Thyroid gland (tissue), 4 donors: ENCODE measurements at regions of chr1 and their contacts with region 1.

Region 1: DNA sequence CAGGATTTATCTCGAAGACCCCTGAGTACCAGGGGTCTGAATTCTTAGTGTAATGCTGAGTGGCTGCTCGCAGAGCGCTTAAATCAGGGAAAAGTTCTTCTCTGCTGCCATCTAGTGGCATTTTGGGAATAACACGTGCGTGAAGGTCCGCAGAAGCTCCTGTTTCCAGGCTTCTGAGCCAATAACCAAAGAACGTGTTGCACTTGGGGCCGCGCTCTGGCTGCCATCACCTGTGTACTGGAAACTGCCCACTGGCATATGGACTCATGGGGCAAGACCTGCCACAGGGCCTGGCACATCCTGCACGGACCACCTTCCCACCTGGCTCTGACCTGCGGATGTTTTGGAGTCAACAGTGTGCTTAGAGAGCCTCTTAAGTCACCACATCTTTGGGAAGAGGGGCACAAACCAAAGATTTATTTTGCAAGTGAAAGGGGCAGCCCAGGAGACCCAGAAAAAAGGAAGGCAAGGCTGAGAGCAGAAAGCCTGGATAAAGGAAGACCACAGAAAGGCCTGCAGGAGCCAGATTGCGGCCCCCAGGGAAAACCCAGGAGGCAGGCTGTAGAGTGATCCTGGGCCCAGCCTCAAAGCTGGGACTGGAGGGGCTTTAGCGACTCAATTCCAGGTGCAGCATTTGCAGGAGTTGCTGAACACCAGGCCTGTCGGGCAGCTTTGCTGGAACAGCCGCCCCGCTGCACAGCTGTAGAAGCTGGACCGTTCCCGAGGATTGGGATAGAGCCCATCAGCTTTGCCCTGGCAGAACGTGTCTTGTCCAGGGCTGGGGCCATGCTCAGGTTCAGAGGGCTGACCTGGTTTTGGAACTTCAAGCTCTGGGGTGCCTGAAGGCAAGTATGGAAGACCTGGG is 13.0 kb downstream of the CHIT1 start:
- DNase-seq: peak; percentile 50 to 52
- H3K4me3 ChIP-seq: no peak overlapping the region
- H3K27ac ChIP-seq: no peak overlapping the region
- H3K4me1 ChIP-seq: no peaks in the 10 kb centered on the region
- H3K27me3 ChIP-seq: no peaks in the 10 kb centered on the region
- CTCF ChIP-seq: peak; percentile 62 to 85 (median 76)
- POLR2A ChIP-seq: no peak

Region 2: GRCh38 chr1:203039609-203040512 is 176.6 kb before region 1 on chr1:
- intact Hi-C with region 1: loop called (anchors 5 kb)
- DNase-seq: no peak
- H3K4me3 ChIP-seq: no peak overlapping the region
- H3K27ac ChIP-seq: no peak overlapping the region
- H3K4me1 ChIP-seq: no peaks in the 10 kb centered on the region
- H3K27me3 ChIP-seq: no peaks in the 10 kb centered on the region
- CTCF ChIP-seq: no peak
- POLR2A ChIP-seq: no peak

Region 3: DNA sequence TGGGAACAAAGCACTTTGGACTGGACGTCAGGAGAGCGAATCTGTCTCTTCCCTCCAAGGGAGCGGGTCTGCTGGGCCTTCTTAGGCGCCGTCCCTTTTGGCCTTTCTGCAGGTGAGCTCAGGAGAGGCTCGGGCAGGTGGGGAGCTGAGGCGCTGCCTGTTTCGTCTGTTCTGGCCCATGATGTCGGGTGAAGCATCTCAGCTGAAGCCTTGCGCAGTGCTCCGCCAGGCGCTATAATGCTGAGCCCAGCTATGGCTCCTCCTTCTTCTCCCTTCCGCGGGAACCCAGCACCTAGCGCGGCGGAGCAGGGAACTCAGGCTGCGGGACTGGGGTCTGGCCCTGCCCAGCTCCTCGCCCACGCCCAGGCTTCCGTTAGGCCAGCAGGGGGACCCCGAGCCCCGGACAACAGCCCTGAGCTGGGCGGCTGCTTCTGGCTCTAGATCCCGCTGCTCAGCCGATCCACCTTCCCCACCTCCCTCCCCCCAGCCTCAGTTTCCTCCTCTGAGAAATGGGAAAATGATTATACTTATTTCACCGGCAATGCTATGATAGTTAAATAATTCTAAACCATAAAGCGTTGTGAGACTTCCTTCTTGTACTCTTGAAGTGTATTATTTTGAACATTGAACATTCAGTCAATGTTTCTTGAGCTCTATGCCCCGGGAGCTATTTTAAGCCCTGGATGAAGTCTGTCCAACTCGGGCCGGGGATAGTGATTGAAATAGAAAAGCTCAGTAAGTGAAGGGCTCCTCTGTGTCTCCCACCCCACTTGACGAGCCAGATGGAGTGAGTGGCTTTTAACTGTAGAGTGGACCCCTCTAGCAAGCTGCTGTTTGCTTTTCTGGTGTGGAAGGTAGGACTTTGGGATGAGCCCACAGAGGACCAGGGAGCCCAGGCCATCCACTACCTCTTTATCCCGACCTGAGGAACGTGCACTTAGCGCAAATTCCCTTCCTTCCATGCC is 98.6 kb before region 1 on chr1:
- intact Hi-C with region 1: loop called (anchors 2 kb)
- DNase-seq: peak; percentile 80 to 81
- H3K4me3 ChIP-seq: no peak overlapping the region
- H3K27ac ChIP-seq: no peak overlapping the region
- H3K4me1 ChIP-seq: no peaks in the 10 kb centered on the region
- H3K27me3 ChIP-seq: no peaks in the 10 kb centered on the region
- CTCF ChIP-seq: peak; percentile 60 to 92 (median 81)
- POLR2A ChIP-seq: no peak

Region 4: DNA sequence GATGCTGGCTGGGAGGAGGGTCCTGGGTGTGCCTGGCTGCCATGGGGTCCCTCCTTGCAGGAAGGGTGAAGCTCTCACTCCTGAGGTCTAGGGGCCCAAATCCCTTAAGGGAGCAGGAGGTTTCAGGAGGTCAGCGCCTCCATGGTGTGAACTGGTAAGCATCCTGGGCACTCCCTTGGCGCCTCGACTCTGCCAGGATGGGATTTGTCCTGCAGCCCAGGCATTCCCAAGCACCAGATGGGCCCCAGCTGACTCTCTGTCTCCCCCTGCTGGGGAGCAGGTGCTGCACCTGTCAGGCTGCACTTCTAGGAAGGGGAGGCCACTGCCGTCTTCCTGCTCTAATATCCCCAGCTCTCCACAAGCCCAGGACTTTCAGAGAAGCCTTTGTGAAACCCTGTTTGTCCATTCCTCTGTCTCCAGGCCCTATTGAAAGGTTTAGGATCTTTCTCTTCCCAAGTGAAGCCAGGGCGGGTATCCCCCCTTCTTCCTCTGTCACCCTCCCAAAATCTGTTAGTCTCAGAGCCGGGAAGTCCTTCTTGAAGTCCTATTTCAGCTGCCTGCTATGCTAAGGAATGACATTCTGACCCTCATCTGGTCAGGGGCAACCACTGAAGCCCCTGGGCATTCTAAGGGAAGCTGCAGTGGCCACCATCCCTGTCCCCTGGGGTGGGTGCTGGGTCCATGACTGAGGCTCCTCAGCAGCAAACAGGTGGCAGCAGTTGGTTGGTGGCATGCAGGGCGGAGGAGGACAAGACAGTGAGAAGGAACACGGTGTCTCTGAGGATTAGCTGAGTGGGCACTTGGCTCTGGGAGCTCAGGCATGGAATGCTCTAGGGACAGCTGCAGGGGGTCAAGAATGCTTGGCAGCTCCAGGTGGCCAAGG is 44.1 kb before region 1 on chr1:
- intact Hi-C with region 1: loop called (anchors 5 kb)
- DNase-seq: peak; percentile 71 to 79
- H3K4me3 ChIP-seq: no peak overlapping the region
- H3K27ac ChIP-seq: peak overlapping the region in 1 of 3 donors; percentile 30
- H3K4me1 ChIP-seq: peaks cover 8 to 9% of the 10 kb centered on the region in 2 donors
- H3K27me3 ChIP-seq: no peaks in the 10 kb centered on the region
- CTCF ChIP-seq: peak; percentile 41 to 84 (median 72)
- POLR2A ChIP-seq: no peak